ENCODE measurements at regions of chr1 and their contacts with region 1.

Region 1: DNA sequence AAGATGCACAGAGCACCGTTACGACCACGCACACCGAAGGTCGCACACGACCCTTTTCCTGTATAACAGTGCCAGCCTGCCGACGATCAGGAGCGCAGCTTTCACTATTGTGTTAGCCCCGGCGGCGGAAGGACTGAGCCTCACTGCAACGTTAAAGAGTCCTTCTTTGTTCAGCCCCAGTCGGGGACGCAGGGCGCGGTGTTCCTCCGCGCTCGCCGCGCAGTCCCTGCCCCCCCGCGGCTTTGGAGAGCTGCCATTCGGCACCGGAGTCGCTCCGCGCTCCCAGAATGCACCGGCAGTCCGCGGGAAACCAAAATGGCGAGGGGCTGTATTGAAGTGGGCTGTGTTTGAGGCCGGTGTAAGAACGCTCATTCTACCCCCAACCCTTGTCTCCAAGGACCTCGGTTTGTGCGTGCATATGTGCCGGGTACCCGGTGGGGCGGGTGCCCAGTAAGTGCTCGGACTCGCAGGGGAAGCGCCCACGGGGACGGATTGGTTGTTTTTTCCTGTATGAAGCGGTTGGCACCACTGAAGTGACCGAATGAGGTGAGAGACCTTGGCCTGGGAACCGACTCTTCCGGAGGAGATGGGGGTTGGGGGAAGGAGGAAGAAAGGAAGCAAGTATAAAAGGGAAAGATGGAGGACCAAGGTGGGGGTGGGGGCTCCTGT is at the start of gene MTF2:
- DNase-seq: peak; percentile 94
- H3K4me3 ChIP-seq: peak within 1 kb of the TSS; percentile 67 to 99 (median 83)
- H3K27ac ChIP-seq: peak within 1 kb of the TSS; percentile 79
- H3K4me1 ChIP-seq: peaks cover 22% of the 10 kb centered on the region
- H3K27me3 ChIP-seq: no peaks in the 10 kb centered on the region
- CTCF ChIP-seq: no peak
- total RNA-seq, gene MTF2: 23.5 to 27.5 TPM

Region 2: GRCh38 chr1:93000751-93001175 is 78.4 kb before region 1 on chr1:
- CTCF ChIA-PET with region 1: no interaction called
- dilution Hi-C with region 1: loop called (anchors 5 kb)
- in situ Hi-C with region 1: no loop called
- intact Hi-C with region 1: no loop called
- DNase-seq: peak; percentile 8
- H3K4me3 ChIP-seq: no peak overlapping the region
- H3K27ac ChIP-seq: no peak overlapping the region
- H3K4me1 ChIP-seq: peaks cover 13% of the 10 kb centered on the region
- H3K27me3 ChIP-seq: peaks cover 3% of the 10 kb centered on the region
- CTCF ChIP-seq: no peak

Region 3: DNA sequence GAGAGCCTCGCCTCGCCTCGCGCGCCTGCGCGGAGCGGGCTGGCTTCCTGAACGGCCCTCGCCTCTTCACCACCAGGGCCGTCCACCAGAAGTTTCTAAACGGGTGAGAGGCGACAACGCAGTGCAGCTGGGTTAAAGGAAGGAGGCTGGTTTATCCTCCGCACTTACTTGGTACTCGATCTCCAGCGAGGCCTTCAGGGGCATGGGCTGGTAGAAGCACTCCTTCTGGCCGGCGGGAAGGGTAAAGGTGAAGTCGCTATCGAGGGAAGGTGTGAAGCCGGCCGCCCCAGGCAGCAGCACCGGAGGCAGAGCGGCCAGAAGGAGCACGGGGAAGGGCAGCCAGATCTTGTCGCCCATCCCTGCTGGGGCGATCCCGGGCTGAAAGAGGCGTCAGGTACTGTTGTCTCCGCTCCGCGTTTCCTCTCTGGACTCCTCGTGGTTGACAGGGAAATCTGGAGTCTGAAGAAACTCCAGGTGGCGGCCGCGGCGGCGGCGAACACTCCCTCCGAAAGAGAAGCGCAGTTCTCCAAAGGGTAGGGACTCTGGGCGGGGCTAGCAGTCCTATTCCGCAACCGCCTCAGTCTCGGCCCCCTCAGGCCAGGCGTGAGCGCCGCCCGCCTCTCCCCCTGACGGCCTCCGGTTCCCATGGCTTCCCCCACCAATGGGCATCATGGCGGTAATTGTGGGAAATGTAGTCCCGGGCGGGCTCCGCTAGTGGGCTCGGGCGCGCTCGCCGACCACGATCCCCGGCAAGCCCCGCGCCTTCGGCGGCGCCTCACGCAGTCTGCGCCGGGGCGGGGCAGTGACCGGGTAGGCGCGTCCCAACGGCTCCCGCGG is 101.0 kb after region 1 on chr1 and contains the start of gene TMED5:
- CTCF ChIA-PET with region 1: no interaction called
- dilution Hi-C with region 1: no loop called
- in situ Hi-C with region 1: no loop called
- intact Hi-C with region 1: loop called (anchors 1 kb)
- DNase-seq: peak; percentile 99
- H3K4me3 ChIP-seq: peak within 1 kb of the TSS; percentile 85 to 100 (median 98)
- H3K27ac ChIP-seq: peak within 1 kb of the TSS; percentile 94
- H3K4me1 ChIP-seq: peaks cover 14% of the 10 kb centered on the region
- H3K27me3 ChIP-seq: no peaks in the 10 kb centered on the region
- CTCF ChIP-seq: peak in 1 of 2 donors; percentile 18
- total RNA-seq, gene TMED5: 50.5 to 61.5 TPM

Region 4: GRCh38 chr1:93304716-93305138 is 225.6 kb after region 1 on chr1:
- CTCF ChIA-PET with region 1: interaction called, 10 read pairs
- dilution Hi-C with region 1: no loop called
- in situ Hi-C with region 1: no loop called
- intact Hi-C with region 1: loop called (anchors 1 kb)
- DNase-seq: peak; percentile 49
- H3K4me3 ChIP-seq: no peak overlapping the region
- H3K27ac ChIP-seq: no peak overlapping the region
- H3K4me1 ChIP-seq: no peaks in the 10 kb centered on the region
- H3K27me3 ChIP-seq: no peaks in the 10 kb centered on the region
- CTCF ChIP-seq: peak; percentile 83 to 93

Region 5: GRCh38 chr1:93878889-93879586 is 799.9 kb after region 1 on chr1 and contains the start of gene DNTTIP2:
- CTCF ChIA-PET with region 1: interaction called, 13 read pairs
- dilution Hi-C with region 1: no loop called
- in situ Hi-C with region 1: no loop called
- intact Hi-C with region 1: no loop called
- DNase-seq: peak; percentile 90
- H3K4me3 ChIP-seq: peak within 1 kb of the TSS; percentile 77 to 86 (median 80)
- H3K27ac ChIP-seq: peak within 1 kb of the TSS; percentile 92
- H3K4me1 ChIP-seq: peaks cover 28% of the 10 kb centered on the region
- H3K27me3 ChIP-seq: no peaks in the 10 kb centered on the region
- CTCF ChIP-seq: no peak
- total RNA-seq, gene DNTTIP2: 40.5 to 74.9 TPM